Mammary epithelial cell (primary cell): ENCODE measurements at regions of chr18 and their contacts with region 1.

Region 1: DNA sequence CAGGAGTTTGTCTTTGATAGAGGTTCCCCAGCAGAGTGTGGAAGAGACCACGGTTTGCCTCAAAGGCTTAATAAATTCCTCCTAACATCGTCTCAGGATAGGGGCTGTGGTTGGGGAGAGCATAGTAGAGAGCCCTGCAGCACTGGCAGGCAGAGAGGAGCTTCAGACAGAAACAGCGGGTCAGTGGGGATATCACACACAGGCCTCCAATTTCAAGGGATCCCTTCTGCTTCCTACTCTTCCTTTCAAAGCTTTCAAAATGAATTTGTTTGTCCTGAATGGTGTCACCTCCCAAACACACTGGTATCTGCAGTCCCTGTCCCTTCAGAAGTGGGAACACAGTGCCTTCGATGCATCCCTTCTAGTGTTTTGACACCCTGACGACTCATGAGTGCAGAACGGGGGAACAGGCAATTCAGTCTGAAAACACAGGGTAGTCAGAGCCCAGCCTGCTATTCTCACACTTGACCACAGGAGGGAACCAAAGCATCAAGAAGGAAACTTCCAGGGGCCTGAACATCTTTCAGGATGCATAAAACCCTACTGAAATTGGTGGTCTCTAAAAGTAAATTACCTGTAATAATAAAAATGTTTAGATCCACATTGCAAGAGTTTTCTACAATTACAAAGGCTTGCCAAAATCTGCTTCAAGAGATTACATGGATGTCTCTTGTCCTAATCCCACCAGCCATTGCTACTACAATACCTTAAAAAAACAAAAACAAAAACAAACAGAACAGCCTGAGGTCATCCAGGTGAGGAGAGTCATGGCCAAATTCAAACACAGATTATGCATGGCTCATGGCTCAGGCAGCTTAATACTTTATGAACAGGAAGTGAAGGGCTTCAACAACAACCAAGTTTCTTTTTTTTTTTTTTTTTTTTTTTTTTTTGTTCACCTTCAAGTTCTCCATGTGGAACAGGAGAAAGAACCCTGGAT is 49.8 kb downstream of the SLC14A2 start:
- DNase-seq: peak; percentile 34
- H3K4me3 ChIP-seq: no peak overlapping the region
- H3K27ac ChIP-seq: no peak overlapping the region
- H3K4me1 ChIP-seq: no peaks in the 10 kb centered on the region
- H3K27me3 ChIP-seq: no peaks in the 10 kb centered on the region
- CTCF ChIP-seq: peak; percentile 90 to 96

Region 2: GRCh38 chr18:45335282-45336043 is 329.6 kb before region 1 on chr18:
- CTCF ChIA-PET with region 1: no interaction called
- dilution Hi-C with region 1: no loop called
- in situ Hi-C with region 1: no loop called
- intact Hi-C with region 1: no loop called
- DNase-seq: peak; percentile 87
- H3K4me3 ChIP-seq: no peak overlapping the region
- H3K27ac ChIP-seq: no peak overlapping the region
- H3K4me1 ChIP-seq: peaks cover 31% of the 10 kb centered on the region
- H3K27me3 ChIP-seq: no peaks in the 10 kb centered on the region
- CTCF ChIP-seq: no peak

Region 3: GRCh38 chr18:45621061-45621511 is 44.0 kb before region 1 on chr18:
- CTCF ChIA-PET with region 1: interaction called, 3 read pairs
- dilution Hi-C with region 1: no loop called
- in situ Hi-C with region 1: no loop called
- intact Hi-C with region 1: loop called (anchors 2 kb)
- DNase-seq: peak; percentile 16
- H3K4me3 ChIP-seq: no peak overlapping the region
- H3K27ac ChIP-seq: no peak overlapping the region
- H3K4me1 ChIP-seq: peaks cover 25% of the 10 kb centered on the region
- H3K27me3 ChIP-seq: no peaks in the 10 kb centered on the region
- CTCF ChIP-seq: peak; percentile 96 to 97

Region 4: GRCh38 chr18:45722899-45723298 is 57.8 kb after region 1 on chr18:
- CTCF ChIA-PET with region 1: no interaction called
- dilution Hi-C with region 1: no loop called
- in situ Hi-C with region 1: no loop called
- intact Hi-C with region 1: loop called (anchors 2 kb)
- DNase-seq: peak; percentile 57
- H3K4me3 ChIP-seq: no peak overlapping the region
- H3K27ac ChIP-seq: no peak overlapping the region
- H3K4me1 ChIP-seq: peaks cover 3% of the 10 kb centered on the region
- H3K27me3 ChIP-seq: no peaks in the 10 kb centered on the region
- CTCF ChIP-seq: peak; percentile 81 to 94

Region 5: GRCh38 chr18:45738658-45739057 is 73.6 kb after region 1 on chr18:
- CTCF ChIA-PET with region 1: no interaction called
- dilution Hi-C with region 1: no loop called
- in situ Hi-C with region 1: no loop called
- intact Hi-C with region 1: no loop called
- DNase-seq: no peak
- H3K4me3 ChIP-seq: no peak overlapping the region
- H3K27ac ChIP-seq: no peak overlapping the region
- H3K4me1 ChIP-seq: no peaks in the 10 kb centered on the region
- H3K27me3 ChIP-seq: no peaks in the 10 kb centered on the region
- CTCF ChIP-seq: peak in 1 of 2 donors; percentile 23

Region 6: GRCh38 chr18:45879681-45880655 is 214.9 kb after region 1 on chr18:
- CTCF ChIA-PET with region 1: interaction called, 5 read pairs
- dilution Hi-C with region 1: no loop called
- in situ Hi-C with region 1: no loop called
- intact Hi-C with region 1: loop called (anchors 1 kb)
- DNase-seq: peak; percentile 50
- H3K4me3 ChIP-seq: no peak overlapping the region
- H3K27ac ChIP-seq: no peak overlapping the region
- H3K4me1 ChIP-seq: no peaks in the 10 kb centered on the region
- H3K27me3 ChIP-seq: no peaks in the 10 kb centered on the region
- CTCF ChIP-seq: peak; percentile 99

Region 7: DNA sequence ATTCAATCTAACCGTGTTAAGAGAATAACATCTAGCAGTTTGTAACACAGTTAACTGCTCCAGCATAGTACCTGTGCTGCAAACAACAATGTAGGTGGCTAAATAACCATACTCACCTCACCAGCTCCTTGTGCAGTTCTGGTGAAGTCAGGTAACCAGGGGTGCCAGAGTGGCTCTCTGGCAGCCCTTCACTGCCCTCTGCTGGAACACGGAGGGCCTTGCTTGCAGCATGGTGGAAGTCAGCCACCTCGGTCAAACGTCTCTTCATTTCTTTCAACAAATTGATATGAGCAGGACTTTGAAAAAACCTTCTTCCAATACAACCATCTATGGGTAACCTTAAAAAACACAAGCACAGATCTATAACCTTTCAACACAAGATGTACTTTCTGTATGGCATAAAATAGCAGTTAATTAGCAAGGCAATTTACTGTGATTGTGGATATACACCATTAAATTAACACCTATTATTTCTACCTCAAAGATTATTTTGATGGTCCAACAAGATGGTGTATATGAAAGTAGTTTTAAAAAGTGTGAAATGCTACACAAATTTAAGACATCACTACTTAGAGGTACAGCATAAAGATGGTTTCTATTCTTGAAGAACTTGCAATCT is 245.4 kb after region 1 on chr18:
- CTCF ChIA-PET with region 1: interaction called, 5 read pairs
- dilution Hi-C with region 1: no loop called
- in situ Hi-C with region 1: no loop called
- intact Hi-C with region 1: loop called (anchors 1 kb)
- DNase-seq: peak; percentile 32
- H3K4me3 ChIP-seq: no peak overlapping the region
- H3K27ac ChIP-seq: no peak overlapping the region
- H3K4me1 ChIP-seq: no peaks in the 10 kb centered on the region
- H3K27me3 ChIP-seq: no peaks in the 10 kb centered on the region
- CTCF ChIP-seq: peak; percentile 87 to 96

Region 8: DNA sequence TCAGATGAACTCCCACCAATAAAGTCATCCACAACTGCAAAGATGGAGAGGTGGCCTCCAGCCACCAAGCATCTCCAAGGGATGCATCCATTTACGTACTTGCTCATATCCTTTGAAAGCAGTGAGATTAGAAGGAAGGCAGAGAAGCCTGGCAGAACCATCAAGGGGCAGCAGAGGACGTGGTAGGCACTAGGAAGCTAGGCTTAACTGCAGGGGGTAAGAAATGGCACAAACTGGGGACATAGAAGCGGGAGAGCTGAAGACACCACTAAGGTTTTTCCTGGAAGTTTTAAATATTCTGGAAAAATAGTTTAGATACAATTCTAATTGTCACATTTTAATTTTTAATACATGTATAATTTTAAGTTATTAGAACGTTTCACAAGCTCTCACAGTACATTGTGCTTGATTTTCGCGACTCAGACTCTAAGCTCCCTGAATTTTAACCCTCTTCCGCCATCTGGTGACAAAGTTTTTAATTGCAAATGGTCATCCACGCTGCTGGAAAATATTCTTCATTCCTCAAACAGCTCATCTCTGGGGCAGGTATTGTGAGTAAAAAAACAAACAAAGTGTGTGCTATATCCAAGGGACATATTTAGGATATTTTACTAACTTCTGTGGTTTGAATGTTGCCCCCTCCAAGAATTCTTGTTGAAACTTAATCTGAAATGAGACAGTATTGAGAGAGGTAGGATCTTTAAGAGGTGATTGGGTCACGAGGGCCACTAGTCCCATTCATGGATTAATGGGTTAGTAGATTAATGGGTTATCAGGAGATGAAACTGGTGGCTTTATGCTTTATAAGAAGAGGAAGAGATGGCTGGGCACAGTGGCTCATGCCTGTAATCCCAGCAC is 408.6 kb after region 1 on chr18:
- CTCF ChIA-PET with region 1: no interaction called
- dilution Hi-C with region 1: no loop called
- in situ Hi-C with region 1: loop called in 1 of 2 experiments (anchors 10 kb)
- intact Hi-C with region 1: loop called (anchors 1 kb)
- DNase-seq: peak; percentile 63
- H3K4me3 ChIP-seq: no peak overlapping the region
- H3K27ac ChIP-seq: no peak overlapping the region
- H3K4me1 ChIP-seq: peaks cover 17% of the 10 kb centered on the region
- H3K27me3 ChIP-seq: no peaks in the 10 kb centered on the region
- CTCF ChIP-seq: peak; percentile 54 to 66